MCF 10A (cell line): ENCODE measurements at regions of chr5 and their contacts with region 1.

Region 1: DNA sequence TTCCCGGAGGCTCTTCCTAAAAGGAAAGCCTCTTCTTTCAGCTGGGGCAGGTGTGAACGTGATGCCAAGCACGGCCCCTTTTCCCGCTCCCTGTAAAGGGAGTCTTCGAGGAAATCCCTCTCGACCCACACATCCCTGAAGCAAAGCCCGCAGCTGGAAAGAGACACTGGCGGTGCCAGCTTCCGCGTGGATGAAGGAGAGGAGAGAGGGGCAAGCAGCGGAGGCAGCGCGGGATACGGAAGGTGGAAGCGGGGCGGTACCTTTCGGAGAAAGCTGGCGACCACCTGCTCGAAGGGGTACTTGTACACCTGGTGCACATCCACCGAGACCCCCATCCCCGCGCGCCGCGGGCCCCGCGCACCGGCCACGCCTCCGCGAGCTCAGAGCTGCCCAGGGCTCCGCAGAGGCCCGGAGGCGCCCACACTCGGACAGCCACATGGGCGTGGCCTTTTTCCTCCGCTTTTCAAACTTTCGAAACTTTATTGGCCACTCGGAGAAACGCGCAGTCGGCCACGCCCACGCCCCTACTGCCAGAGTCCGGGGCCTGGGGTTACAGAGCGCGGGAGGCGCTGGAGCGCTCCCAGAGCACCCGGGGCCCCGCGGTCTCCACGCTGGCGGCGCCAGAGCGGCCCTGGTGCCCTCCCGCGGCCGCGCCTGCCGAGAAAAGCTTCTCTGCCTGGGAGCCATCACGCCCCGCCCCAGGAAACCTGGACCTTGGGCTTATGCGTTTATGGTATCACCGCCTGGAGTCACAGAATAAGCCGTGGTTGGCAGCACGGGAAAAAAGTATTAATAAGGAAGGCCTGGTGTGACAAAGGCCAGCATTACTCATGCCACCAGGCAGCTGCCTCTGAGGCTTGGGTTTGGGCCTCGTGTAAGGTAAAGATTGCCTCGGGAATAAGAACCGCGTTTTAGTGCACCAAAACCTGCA is at the start of gene PRELID2:
- DNase-seq: peak; percentile 94
- H3K4me3 Mint-ChIP-seq: peak within 1 kb of the TSS; percentile 73
- H3K27ac Mint-ChIP-seq: no peak within 1 kb of the TSS
- H3K4me1 Mint-ChIP-seq: peaks cover 35% of the 10 kb centered on the region
- H3K27me3 Mint-ChIP-seq: no peaks in the 10 kb centered on the region
- CTCF ChIP-seq: no peak
- total RNA-seq, gene PRELID2: 11.4 and 11.7 TPM in 2 replicates

Region 2: GRCh38 chr5:145847499-145848497 is 12.6 kb after region 1 on chr5:
- CTCF ChIA-PET with region 1: interaction called, 8 read pairs
- POLR2A ChIA-PET with region 1: interaction called, 12 read pairs
- intact Hi-C with region 1: no loop called
- DNase-seq: peak; percentile 68
- H3K4me3 Mint-ChIP-seq: no peak overlapping the region
- H3K27ac Mint-ChIP-seq: peak overlapping the region; percentile 18
- H3K4me1 Mint-ChIP-seq: peaks cover 21% of the 10 kb centered on the region
- H3K27me3 Mint-ChIP-seq: no peaks in the 10 kb centered on the region
- CTCF ChIP-seq: no peak

Region 3: DNA sequence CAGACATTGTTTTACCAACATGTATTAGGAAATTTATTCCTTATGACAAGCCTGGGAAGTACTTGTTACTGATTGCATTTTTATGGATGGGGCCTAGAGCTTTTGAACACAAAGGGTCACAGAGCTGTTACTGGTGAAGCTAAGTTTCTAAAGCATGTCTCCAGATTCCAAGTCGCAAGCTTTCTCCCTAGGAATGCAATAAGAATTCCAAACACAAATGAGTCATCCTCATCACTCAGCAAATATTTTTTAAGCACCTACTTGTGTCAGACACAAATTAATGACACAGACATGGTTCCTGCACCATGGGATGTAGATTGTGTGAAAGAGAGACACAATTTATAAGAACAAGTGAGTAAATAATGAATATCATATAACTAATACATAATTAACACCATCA is 90.2 kb after region 1 on chr5:
- CTCF ChIA-PET with region 1: no interaction called
- POLR2A ChIA-PET with region 1: interaction called, 16 read pairs
- intact Hi-C with region 1: no loop called
- DNase-seq: peak; percentile 80
- H3K4me3 Mint-ChIP-seq: no peak overlapping the region
- H3K27ac Mint-ChIP-seq: peak overlapping the region; percentile 84
- H3K4me1 Mint-ChIP-seq: peaks cover 37% of the 10 kb centered on the region
- H3K27me3 Mint-ChIP-seq: no peaks in the 10 kb centered on the region
- CTCF ChIP-seq: no peak

Region 4: GRCh38 chr5:146041180-146041789 is 206.1 kb after region 1 on chr5:
- CTCF ChIA-PET with region 1: interaction called, 144 read pairs
- POLR2A ChIA-PET with region 1: interaction called, 4 read pairs
- intact Hi-C with region 1: no loop called
- DNase-seq: peak; percentile 34
- H3K4me3 Mint-ChIP-seq: no peak overlapping the region
- H3K27ac Mint-ChIP-seq: peak overlapping the region; percentile 62
- H3K4me1 Mint-ChIP-seq: peaks cover 53% of the 10 kb centered on the region
- H3K27me3 Mint-ChIP-seq: no peaks in the 10 kb centered on the region
- CTCF ChIP-seq: no peak